ENCODE measurements at regions of chr11 and their contacts with region 1.

Region 1: DNA sequence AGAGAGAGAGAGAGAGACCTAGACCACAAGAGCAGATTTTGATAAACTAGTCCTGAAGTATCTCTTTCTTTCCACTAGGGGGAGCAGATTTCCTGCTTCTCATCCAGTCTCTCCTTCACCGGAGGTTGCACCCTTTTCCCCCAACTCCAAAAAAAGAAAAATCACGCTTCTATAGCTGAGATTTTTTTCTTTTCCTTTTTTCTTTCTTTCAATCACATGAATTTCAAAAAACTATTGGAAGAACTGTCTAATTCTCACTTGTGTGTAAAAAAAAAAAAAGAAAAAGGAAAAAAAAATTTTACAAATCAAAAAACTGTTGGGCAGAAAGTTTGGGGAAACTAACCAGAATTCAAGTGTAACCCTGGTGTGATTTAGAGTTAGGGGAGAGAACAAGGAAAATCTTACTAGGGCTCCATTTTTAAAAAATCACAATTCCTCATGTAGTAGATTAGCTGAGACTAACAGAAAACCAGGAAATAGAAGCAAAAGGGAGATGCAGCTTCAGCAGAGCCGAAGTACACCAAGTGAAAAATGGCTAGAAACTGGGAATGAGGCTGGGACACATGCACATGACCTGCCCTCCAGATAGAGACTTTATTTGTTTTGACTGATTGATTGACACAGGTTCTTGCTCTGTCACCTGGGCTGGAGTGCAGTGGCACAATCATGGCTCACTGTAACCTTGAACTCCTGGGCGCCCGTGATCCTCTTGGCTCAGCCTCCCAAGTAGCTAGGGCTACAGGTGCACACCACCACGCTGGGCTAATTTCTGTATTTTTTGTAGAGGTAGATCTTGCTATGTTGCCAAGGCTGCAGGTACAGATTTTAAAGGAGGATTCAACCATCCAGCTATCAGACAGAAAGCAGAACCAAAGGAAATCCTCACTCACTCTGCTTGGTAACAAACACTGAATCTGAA is 27.1 kb downstream of the SDHD start:
- DNase-seq: no peak
- H3K4me3 ChIP-seq: no peak overlapping the region
- H3K27ac ChIP-seq: no peak overlapping the region
- H3K4me1 ChIP-seq: peaks cover 0 to 7% (median 3%) of the 10 kb centered on the region in 4 donors
- H3K27me3 ChIP-seq: no peaks in the 10 kb centered on the region
- CTCF ChIP-seq: peak; percentile 63 to 74 (median 71)
- EP300 ChIP-seq: no peak
- POLR2A ChIP-seq: no peak

Region 2: GRCh38 chr11:112174789-112175598 is 61.2 kb after region 1 on chr11 and contains the start of gene BCO2:
- intact Hi-C with region 1: loop called (anchors 2 kb)
- DNase-seq: peak; percentile 96
- H3K4me3 ChIP-seq: peak within 1 kb of the TSS; percentile 43 to 50 (median 46)
- H3K27ac ChIP-seq: peak within 1 kb of the TSS; percentile 68 to 80 (median 76)
- H3K4me1 ChIP-seq: peaks cover 3 to 31% (median 27%) of the 10 kb centered on the region in 4 donors
- H3K27me3 ChIP-seq: no peaks in the 10 kb centered on the region
- CTCF ChIP-seq: peak; percentile 80 to 90 (median 88)
- EP300 ChIP-seq: no peak
- POLR2A ChIP-seq: no peak
- total RNA-seq, gene BCO2: 1.4 to 11.6 (median 3.1) TPM

Measured in esophagus muscularis mucosa (tissue), 4 donors.